ENCODE measurements at regions of chr12 and their contacts with region 1.

Region 1: DNA sequence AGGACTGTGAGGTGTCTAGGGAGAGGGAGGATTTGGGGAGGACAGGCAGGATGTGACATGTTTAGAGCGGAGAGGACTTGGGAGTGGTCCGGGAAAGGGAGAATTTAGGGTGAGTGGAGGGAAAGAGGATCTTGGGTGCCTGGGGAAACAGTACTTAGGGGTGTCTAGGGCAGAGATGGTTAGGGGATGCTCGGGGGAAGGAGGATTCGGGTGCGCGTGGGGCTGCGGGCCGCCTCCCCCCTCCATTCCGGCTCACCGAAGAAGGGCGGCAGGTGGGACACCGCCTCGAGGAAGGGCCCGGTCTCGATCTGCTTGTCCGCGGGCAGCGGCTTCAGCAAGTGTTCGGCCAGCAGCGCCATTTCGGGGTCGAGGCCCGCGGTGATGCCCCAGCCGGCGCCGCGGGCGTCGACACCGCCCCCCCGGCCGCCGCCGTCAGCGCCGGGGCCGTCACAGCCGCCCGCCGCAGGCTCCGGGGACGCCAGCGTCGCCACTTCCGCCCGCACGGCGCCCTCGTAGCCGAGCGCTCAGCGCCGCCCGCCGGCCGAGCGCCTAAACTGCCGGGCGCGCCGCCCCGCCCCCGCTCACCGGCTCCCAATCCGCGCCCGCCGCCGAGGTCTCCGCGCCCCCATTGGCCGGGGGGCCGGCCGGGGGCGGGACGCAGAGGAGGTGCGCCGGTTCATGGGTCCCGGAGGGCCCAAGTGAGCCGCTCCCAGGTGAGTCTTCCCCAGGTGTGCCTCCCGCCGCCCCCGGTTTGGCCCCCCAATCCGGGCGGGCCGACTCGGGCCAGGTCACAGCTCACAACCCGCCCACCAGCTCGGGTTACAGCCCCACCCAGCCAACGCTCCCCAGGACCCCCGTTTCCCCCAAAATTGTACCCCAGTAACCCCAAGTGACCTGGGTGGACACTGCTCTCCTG is at the start of gene GLTP:
- DNase-seq: peak; percentile 45
- ATAC-seq: peak; percentile 95
- H3K4me3 ChIP-seq: peak within 1 kb of the TSS; percentile 79 to 94
- H3K27ac ChIP-seq: peak within 1 kb of the TSS; percentile 35; the same call in 1 of the 2 replicates
- H3K4me1 ChIP-seq: peaks cover 17 to 34% of the 10 kb centered on the region in 2 experiments
- H3K27me3 ChIP-seq: no peaks in the 10 kb centered on the region
- CTCF ChIP-seq: peak; percentile 12 to 27 (median 24); a peak in 3 of 6 replicates
- POLR2A ChIP-seq: no peak
- RAD21 ChIP-seq: peak; percentile 54
- total RNA-seq, gene GLTP: 26.6 TPM

Region 2: DNA sequence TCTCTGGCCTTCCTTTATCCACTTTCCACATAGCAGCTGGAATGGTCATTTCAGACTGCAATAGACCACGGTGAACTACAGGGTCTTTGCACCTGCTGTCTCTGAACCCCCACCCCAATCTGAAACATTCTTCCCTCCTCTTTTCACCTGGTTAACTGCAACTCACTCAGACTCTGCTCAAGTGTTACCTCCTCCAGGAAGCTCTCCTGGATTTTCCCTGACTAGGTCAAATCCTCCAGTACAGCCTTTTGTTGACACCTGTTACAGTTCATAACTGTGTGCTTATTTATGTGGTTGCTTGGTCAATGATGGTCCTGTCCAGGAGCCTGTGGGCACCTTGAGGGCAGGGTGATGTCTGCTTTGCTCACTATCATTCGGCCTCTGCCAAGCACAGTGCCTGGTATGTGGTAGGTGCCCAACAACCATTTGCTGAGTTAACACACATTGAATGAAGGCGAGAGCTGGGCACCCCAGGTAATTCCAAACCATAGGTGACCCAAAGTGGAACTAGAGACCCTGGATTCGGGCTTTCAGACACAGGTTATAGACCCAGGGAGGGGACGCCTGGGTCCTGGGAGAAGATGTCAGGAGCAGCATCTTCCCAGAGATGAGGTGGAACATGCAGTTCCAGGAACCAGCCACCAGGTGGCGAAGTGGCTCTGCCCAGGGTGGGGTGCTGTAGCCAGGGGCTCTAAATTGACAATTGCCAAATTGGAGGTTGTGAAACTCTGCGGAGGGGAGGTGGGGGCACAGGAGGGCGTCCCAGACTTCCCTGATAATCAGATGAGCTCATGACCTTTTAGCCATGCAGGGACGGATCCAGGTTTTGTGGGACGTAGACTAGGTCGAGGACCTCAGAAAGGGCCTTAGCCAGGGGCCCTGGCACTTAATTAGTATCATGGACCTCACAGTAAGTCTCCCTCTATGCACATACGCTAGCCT is 75.2 kb before region 1 on chr12:
- CTCF ChIA-PET with region 1: no interaction called
- POLR2A ChIA-PET with region 1: no interaction called
- RAD21 ChIA-PET with region 1: no interaction called
- intact Hi-C with region 1: loop called (anchors 2 kb)
- DNase-seq: peak; percentile 15
- ATAC-seq: peak; percentile 95
- H3K4me3 ChIP-seq: no peak overlapping the region
- H3K27ac ChIP-seq: no peak overlapping the region
- H3K4me1 ChIP-seq: no peaks in the 10 kb centered on the region
- H3K27me3 ChIP-seq: no peaks in the 10 kb centered on the region
- CTCF ChIP-seq: peak; percentile 94 to 98 (median 96)
- POLR2A ChIP-seq: no peak
- RAD21 ChIP-seq: peak; percentile 92

Region 3: GRCh38 chr12:109818905-109819500 is 61.3 kb before region 1 on chr12:
- CTCF ChIA-PET with region 1: no interaction called
- POLR2A ChIA-PET with region 1: no interaction called
- RAD21 ChIA-PET with region 1: no interaction called
- intact Hi-C with region 1: no loop called
- DNase-seq: no peak
- ATAC-seq: peak; percentile 28
- H3K4me3 ChIP-seq: no peak overlapping the region
- H3K27ac ChIP-seq: no peak overlapping the region
- H3K4me1 ChIP-seq: peaks cover 9 to 36% of the 10 kb centered on the region in 2 experiments; a peak in 3 of 4 replicates
- H3K27me3 ChIP-seq: no peaks in the 10 kb centered on the region
- CTCF ChIP-seq: no peak
- POLR2A ChIP-seq: no peak
- RAD21 ChIP-seq: no peak

Region 4: GRCh38 chr12:111322336-111323250 is 1442.3 kb after region 1 on chr12:
- CTCF ChIA-PET with region 1: no interaction called
- POLR2A ChIA-PET with region 1: no interaction called
- RAD21 ChIA-PET with region 1: no interaction called
- intact Hi-C with region 1: no loop called
- DNase-seq: no peak
- ATAC-seq: no peak
- H3K4me3 ChIP-seq: no peak overlapping the region
- H3K27ac ChIP-seq: no peak overlapping the region
- H3K4me1 ChIP-seq: peaks cover 3 to 17% of the 10 kb centered on the region in 2 experiments
- H3K27me3 ChIP-seq: no peaks in the 10 kb centered on the region
- CTCF ChIP-seq: no peak
- POLR2A ChIP-seq: no peak
- RAD21 ChIP-seq: no peak